Caco-2 (cell line): ENCODE measurements at regions of chr1 and their contacts with region 1.

Region 1: GRCh38 chr1:161484613-161485012 is 20.6 kb upstream of the FCGR2A start:
- DNase-seq: no peak
- H3K4me3 ChIP-seq: no peak overlapping the region
- H3K4me3 Mint-ChIP-seq: no peak overlapping the region
- H3K27ac Mint-ChIP-seq: no peak overlapping the region
- H3K4me1 ChIP-seq: no peaks in the 10 kb centered on the region
- H3K4me1 Mint-ChIP-seq: no peaks in the 10 kb centered on the region
- H3K27me3 ChIP-seq: no peaks in the 10 kb centered on the region; the same call in none of the 2 replicates
- H3K27me3 Mint-ChIP-seq: peaks cover 11% of the 10 kb centered on the region
- CTCF ChIP-seq: peak; percentile 14 to 39

Region 2: GRCh38 chr1:161382214-161383019 is 102.2 kb before region 1 on chr1:
- CTCF ChIA-PET with region 1: no interaction called
- POLR2A ChIA-PET with region 1: no interaction called
- intact Hi-C with region 1: no loop called
- DNase-seq: peak in 1 of 2 experiments; percentile 45
- H3K4me3 ChIP-seq: no peak overlapping the region
- H3K4me3 Mint-ChIP-seq: no peak overlapping the region
- H3K27ac Mint-ChIP-seq: no peak overlapping the region
- H3K4me1 ChIP-seq: peaks cover 8% of the 10 kb centered on the region; the same call in 1 of the 2 replicates
- H3K4me1 Mint-ChIP-seq: no peaks in the 10 kb centered on the region
- H3K27me3 ChIP-seq: no peaks in the 10 kb centered on the region
- H3K27me3 Mint-ChIP-seq: no peaks in the 10 kb centered on the region
- CTCF ChIP-seq: peak; percentile 43 to 54

Region 3: DNA sequence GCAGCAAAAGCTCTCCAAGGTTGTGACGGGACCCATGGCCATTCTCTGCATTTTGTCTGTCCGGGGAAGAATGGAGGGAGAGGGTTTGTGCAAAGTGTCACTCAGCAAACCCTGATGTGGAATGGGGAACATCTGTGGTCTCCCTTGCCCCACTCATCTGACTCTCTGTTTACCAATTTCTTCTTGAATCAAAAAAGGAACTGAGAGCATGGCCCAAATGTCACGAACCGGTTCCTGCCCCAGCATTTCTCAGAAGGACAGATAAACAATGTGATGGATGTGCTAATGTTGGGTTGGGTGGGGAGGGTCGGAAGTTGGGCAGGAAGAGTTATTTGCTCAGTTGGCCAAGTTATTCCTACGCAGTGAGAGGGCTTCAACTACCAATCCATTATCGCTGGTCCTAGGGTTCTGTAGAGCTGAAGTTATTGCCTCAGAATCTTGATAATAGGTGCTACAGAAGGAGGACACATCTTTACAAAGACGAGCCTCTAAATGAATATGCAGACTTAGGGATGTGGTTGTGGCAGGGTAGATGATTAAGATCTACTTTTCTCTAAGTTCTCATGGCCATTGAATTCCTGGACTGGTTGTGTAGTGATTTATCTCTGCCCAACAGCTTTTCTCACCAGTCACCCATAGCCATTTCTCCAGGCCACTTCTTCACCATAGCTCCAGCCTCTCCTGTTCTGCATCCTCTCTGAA is 255.4 kb after region 1 on chr1:
- CTCF ChIA-PET with region 1: interaction called, 5 read pairs
- POLR2A ChIA-PET with region 1: no interaction called
- intact Hi-C with region 1: loop called (anchors 1 kb)
- DNase-seq: no peak
- H3K4me3 ChIP-seq: no peak overlapping the region
- H3K4me3 Mint-ChIP-seq: no peak overlapping the region
- H3K27ac Mint-ChIP-seq: no peak overlapping the region
- H3K4me1 ChIP-seq: no peaks in the 10 kb centered on the region
- H3K4me1 Mint-ChIP-seq: no peaks in the 10 kb centered on the region
- H3K27me3 ChIP-seq: no peaks in the 10 kb centered on the region
- H3K27me3 Mint-ChIP-seq: peaks cover 8% of the 10 kb centered on the region
- CTCF ChIP-seq: no peak